ENCODE measurements at regions of chr4 and their contacts with region 1.

Region 1: GRCh38 chr4:80322716-80323115 is 12.8 kb upstream of the CFAP299 start:
- DNase-seq: peak; percentile 63
- H3K4me3 Mint-ChIP-seq: no peak overlapping the region
- H3K27ac Mint-ChIP-seq: no peak overlapping the region
- H3K4me1 Mint-ChIP-seq: peaks cover 7% of the 10 kb centered on the region
- H3K27me3 Mint-ChIP-seq: no peaks in the 10 kb centered on the region
- CTCF ChIP-seq: peak; percentile 49

Region 2: GRCh38 chr4:78951862-78952472 is 1370.7 kb before region 1 on chr4:
- CTCF ChIA-PET with region 1: interaction called, 4 read pairs
- POLR2A ChIA-PET with region 1: no interaction called
- intact Hi-C with region 1: loop called (anchors 5 kb)
- DNase-seq: peak; percentile 62
- H3K4me3 Mint-ChIP-seq: no peak overlapping the region
- H3K27ac Mint-ChIP-seq: no peak overlapping the region
- H3K4me1 Mint-ChIP-seq: no peaks in the 10 kb centered on the region
- H3K27me3 Mint-ChIP-seq: no peaks in the 10 kb centered on the region
- CTCF ChIP-seq: peak; percentile 73

Region 3: GRCh38 chr4:80112236-80112635 is 210.5 kb before region 1 on chr4:
- CTCF ChIA-PET with region 1: no interaction called
- POLR2A ChIA-PET with region 1: no interaction called
- intact Hi-C with region 1: no loop called
- DNase-seq: peak; percentile 42
- H3K4me3 Mint-ChIP-seq: no peak overlapping the region
- H3K27ac Mint-ChIP-seq: no peak overlapping the region
- H3K4me1 Mint-ChIP-seq: no peaks in the 10 kb centered on the region
- H3K27me3 Mint-ChIP-seq: no peaks in the 10 kb centered on the region
- CTCF ChIP-seq: no peak

Region 4: DNA sequence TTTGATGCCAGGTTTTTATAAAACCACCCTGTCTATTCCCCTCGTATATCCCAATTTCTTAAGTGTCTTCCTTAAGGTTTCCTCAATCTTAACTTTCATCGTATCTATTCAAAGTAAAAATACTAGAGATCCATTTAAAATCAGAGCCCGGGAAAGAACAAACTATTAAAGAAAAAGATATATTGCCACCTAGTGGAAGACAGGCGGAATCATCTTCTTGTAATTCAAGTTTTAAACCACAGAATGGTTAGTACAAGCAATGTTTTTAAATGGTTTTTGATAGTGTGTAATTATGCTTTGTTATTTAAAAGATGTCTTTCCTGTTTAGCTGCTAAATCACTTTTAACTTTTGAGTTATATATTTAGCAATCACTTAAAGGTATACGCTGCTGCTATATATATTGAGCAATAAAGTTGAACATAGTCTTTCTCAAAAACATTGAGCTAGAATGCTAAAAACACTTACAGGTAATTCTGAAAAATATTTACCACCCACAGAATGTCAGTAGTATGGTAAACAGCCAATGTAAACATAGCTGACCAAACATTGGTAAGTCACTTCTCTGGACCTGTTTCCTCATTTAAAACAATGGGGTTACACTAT is 107.2 kb before region 1 on chr4:
- CTCF ChIA-PET with region 1: interaction called, 56 read pairs
- POLR2A ChIA-PET with region 1: interaction called, 6 read pairs
- intact Hi-C with region 1: no loop called
- DNase-seq: peak; percentile 39
- H3K4me3 Mint-ChIP-seq: no peak overlapping the region
- H3K27ac Mint-ChIP-seq: no peak overlapping the region
- H3K4me1 Mint-ChIP-seq: peaks cover 15% of the 10 kb centered on the region
- H3K27me3 Mint-ChIP-seq: no peaks in the 10 kb centered on the region
- CTCF ChIP-seq: peak; percentile 44

Region 5: GRCh38 chr4:80266253-80266901 is 56.3 kb before region 1 on chr4 and contains the start of gene FGF5:
- CTCF ChIA-PET with region 1: interaction called, 6 read pairs
- POLR2A ChIA-PET with region 1: interaction called, 3 read pairs
- intact Hi-C with region 1: loop called (anchors 1 kb)
- DNase-seq: peak; percentile 66
- H3K4me3 Mint-ChIP-seq: peak within 1 kb of the TSS; percentile 92
- H3K27ac Mint-ChIP-seq: peak within 1 kb of the TSS; percentile 48
- H3K4me1 Mint-ChIP-seq: peaks cover 10% of the 10 kb centered on the region
- H3K27me3 Mint-ChIP-seq: no peaks in the 10 kb centered on the region
- CTCF ChIP-seq: no peak
- total RNA-seq, gene FGF5: not detected in 2 replicates

Region 6: DNA sequence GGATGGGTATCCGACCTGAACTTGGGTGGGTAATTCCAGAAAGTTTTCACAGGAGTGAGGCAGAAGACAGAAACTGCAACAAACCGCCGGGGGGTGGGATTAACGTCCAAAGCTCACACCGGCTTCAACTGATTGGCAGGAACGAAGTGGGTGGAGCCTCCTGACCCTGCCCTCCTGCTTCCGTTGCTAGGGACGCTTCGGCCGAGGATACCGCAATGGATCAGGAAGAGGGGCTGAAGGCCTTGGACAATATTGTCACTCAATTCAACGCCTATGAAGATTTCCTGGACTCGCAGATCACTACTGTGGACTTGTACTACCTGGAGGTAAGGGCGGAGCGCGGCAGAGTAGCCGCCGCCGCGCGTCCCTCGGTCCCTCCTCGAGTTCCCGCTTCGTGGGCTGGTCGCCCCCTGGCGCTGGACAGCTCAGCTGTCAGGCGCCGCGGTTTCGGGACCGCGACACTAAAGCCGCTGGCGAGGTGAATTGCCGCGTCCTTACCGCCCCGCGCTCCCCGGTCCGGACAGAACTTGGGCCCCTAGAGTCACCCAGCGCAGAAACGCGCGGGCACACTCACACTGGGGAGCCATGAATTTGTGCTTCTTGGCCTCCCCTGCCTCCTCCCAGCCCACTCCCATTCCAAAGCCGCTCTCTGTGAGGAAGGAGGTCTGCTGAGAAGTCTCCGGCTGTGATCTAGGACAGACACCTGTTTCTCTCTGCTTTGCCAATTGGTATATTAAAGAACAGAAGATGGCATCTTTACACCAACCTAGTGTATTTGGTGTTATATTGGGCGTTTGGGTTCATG is 13.0 kb after region 1 on chr4 and contains the start of gene CFAP299:
- CTCF ChIA-PET with region 1: interaction called, 15 read pairs
- POLR2A ChIA-PET with region 1: interaction called, 4 read pairs
- intact Hi-C with region 1: no loop called
- DNase-seq: peak; percentile 94
- H3K4me3 Mint-ChIP-seq: peak within 1 kb of the TSS; percentile 80
- H3K27ac Mint-ChIP-seq: no peak within 1 kb of the TSS
- H3K4me1 Mint-ChIP-seq: no peaks in the 10 kb centered on the region
- H3K27me3 Mint-ChIP-seq: no peaks in the 10 kb centered on the region
- CTCF ChIP-seq: peak; percentile 45
- total RNA-seq, gene CFAP299: 0.33 TPM in 1 of 2 replicates, not detected in the other

Region 7: DNA sequence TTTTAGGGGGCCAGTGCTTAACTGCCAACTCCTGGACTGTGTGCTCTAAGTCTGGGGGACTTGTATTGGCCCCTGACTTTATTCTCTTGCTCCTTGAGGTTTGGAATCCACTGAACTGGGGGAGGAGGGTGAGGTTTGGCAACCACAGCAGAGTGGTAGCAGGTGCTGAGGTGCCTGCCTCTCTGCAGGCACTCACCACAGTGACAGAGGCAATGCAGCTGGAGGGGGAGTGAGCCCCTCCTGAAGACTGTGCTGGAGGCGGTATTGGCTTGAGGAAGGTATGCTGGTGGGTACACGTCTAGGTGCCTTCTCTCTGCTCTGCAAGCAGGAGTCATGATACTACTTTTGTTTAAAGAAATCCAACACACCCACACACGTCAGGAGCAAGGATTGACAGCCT is 37.4 kb after region 1 on chr4:
- CTCF ChIA-PET with region 1: no interaction called
- POLR2A ChIA-PET with region 1: no interaction called
- intact Hi-C with region 1: no loop called
- DNase-seq: no peak
- H3K4me3 Mint-ChIP-seq: no peak overlapping the region
- H3K27ac Mint-ChIP-seq: no peak overlapping the region
- H3K4me1 Mint-ChIP-seq: no peaks in the 10 kb centered on the region
- H3K27me3 Mint-ChIP-seq: peaks cover 23% of the 10 kb centered on the region
- CTCF ChIP-seq: no peak